B cell (primary cell): ENCODE measurements at regions of chr19 and their contacts with region 1.

Region 1: GRCh38 chr19:52942386-52943133 is 19.3 kb upstream of the ZNF888 start:
- DNase-seq: peak; percentile 96
- ATAC-seq: peak; percentile 100
- H3K4me3 ChIP-seq: peak overlapping the region; percentile 64 to 97 (median 88)
- H3K4me3 Mint-ChIP-seq: peak overlapping the region; percentile 92
- H3K27ac ChIP-seq: peak overlapping the region; percentile 72 to 90
- H3K27ac Mint-ChIP-seq: peak overlapping the region; percentile 86
- H3K4me1 ChIP-seq: peaks cover 6 to 20% of the 10 kb centered on the region in 2 donors
- H3K4me1 Mint-ChIP-seq: peaks cover 30% of the 10 kb centered on the region
- H3K27me3 ChIP-seq: no peaks in the 10 kb centered on the region
- H3K27me3 Mint-ChIP-seq: no peaks in the 10 kb centered on the region
- CTCF ChIP-seq: no peak

Region 2: GRCh38 chr19:52527134-52527955 is 415.2 kb before region 1 on chr19 and contains the start of gene ZNF808:
- CTCF ChIA-PET with region 1: no interaction called
- POLR2A ChIA-PET with region 1: no interaction called
- intact Hi-C with region 1: loop called (anchors 5 kb)
- DNase-seq: peak; percentile 94
- ATAC-seq: peak; percentile 92
- H3K4me3 ChIP-seq: peak within 1 kb of the TSS; percentile 60 to 97 (median 89)
- H3K4me3 Mint-ChIP-seq: peak within 1 kb of the TSS; percentile 96
- H3K27ac ChIP-seq: peak within 1 kb of the TSS; percentile 88 to 94
- H3K27ac Mint-ChIP-seq: peak within 1 kb of the TSS; percentile 96
- H3K4me1 ChIP-seq: peaks cover 9 to 19% of the 10 kb centered on the region in 2 donors
- H3K4me1 Mint-ChIP-seq: peaks cover 26% of the 10 kb centered on the region
- H3K27me3 ChIP-seq: no peaks in the 10 kb centered on the region
- H3K27me3 Mint-ChIP-seq: no peaks in the 10 kb centered on the region
- CTCF ChIP-seq: peak; percentile 64
- total RNA-seq, gene ZNF808: 54.8 and 56.0 TPM in 2 replicates

Region 3: DNA sequence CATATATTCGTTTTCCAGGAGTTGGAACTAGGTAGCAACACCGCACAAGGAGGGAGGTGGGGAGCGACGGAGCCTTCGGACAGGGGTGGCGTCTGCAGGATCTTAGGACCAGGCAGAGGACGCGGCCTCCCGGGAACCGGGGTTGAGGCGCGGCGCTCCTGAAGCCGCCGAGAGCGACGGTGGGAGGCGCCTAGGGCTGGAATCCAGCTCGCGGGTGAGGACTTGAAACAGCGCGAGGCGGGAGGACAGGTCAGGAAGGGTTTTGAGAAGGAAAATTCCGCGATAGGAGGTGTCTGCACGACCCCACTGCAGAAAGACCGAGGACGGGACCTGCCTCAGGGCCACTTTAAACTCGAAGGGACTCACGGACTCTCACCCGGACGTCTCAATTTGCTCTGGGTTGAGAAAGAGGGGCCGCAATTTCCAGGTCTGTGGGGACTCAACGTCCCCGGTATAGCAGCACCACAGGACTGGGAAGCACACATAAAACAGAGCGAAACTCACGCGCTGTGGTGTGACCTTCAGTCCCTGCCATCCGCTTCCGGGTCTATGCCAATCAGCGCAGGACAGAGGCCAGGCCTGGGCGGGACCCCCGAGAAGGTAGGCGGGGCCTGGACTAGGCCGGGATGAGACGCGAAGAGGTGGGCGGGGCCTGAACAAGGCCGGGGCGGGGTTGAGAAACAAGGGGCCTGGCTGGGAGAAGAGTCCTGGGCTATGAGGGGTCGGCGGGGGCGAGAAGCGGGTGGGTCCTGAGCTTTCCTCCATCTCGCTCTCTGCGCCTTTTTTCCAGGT is 45.2 kb before region 1 on chr19 and contains the start of gene ZNF320:
- CTCF ChIA-PET with region 1: no interaction called
- POLR2A ChIA-PET with region 1: no interaction called
- intact Hi-C with region 1: loop called (anchors 1 kb)
- DNase-seq: peak; percentile 95
- ATAC-seq: peak; percentile 100
- H3K4me3 ChIP-seq: peak within 1 kb of the TSS; percentile 85 to 98 (median 98)
- H3K4me3 Mint-ChIP-seq: peak within 1 kb of the TSS; percentile 96
- H3K27ac ChIP-seq: peak within 1 kb of the TSS; percentile 66 to 83
- H3K27ac Mint-ChIP-seq: peak within 1 kb of the TSS; percentile 94
- H3K4me1 ChIP-seq: peaks cover 5 to 17% of the 10 kb centered on the region in 2 donors
- H3K4me1 Mint-ChIP-seq: peaks cover 20% of the 10 kb centered on the region
- H3K27me3 ChIP-seq: no peaks in the 10 kb centered on the region
- H3K27me3 Mint-ChIP-seq: no peaks in the 10 kb centered on the region
- CTCF ChIP-seq: no peak
- total RNA-seq, gene ZNF320: 33.1 and 36.0 TPM in 2 replicates

Region 4: DNA sequence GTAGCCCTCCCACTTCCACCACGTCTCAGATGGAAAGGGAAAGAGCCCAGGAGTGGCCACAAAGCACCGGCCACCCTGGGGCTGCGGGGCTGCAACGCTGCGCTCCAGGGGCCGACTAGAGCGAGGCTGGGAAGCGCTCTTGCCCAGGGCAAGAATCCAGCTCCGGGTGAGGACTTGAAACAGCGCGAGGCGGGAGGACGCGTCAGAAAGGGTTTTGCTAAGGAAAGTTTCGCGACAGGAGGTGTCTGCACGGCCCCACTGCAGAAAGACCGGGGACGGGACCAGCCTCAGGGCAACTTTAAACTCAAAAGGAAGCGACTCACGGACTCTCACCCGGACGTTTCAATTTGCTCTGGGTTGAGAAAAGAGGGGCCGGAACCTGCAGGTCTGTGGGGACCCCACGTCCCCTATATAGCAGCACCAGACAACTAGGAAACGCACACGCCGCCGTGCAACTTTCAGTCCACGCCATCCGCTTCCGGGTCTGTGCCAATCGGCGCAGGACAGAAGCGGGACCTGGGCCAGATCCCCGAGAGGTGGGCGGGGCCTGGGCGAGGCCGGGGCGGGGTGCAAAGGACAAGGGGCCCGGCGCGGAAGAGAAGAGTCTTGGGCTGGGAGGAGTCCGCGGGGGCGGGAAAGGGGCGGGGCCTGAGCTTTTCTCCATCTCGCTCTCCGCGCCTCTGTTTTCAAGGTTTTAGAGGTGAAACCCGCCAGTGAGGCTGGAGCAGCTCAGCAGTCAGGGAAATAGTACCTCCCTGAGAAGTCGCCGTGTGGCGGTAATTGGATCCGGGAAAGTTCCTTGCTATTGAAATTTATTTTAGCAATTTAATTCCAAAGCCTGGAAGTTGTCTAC is 20.1 kb after region 1 on chr19 and contains the start of gene ZNF816:
- CTCF ChIA-PET with region 1: interaction called, 3 read pairs
- POLR2A ChIA-PET with region 1: no interaction called
- intact Hi-C with region 1: loop called (anchors 1 kb)
- DNase-seq: peak; percentile 96
- ATAC-seq: peak; percentile 100
- H3K4me3 ChIP-seq: peak within 1 kb of the TSS; percentile 72 to 92 (median 80)
- H3K4me3 Mint-ChIP-seq: peak within 1 kb of the TSS; percentile 92
- H3K27ac ChIP-seq: peak within 1 kb of the TSS; percentile 50 to 69
- H3K27ac Mint-ChIP-seq: peak within 1 kb of the TSS; percentile 92
- H3K4me1 ChIP-seq: peaks cover 14 to 19% of the 10 kb centered on the region in 2 donors
- H3K4me1 Mint-ChIP-seq: peaks cover 32% of the 10 kb centered on the region
- H3K27me3 ChIP-seq: no peaks in the 10 kb centered on the region
- H3K27me3 Mint-ChIP-seq: no peaks in the 10 kb centered on the region
- CTCF ChIP-seq: no peak
- total RNA-seq, gene ZNF816: 22.3 and 25.0 TPM in 2 replicates

Region 5: DNA sequence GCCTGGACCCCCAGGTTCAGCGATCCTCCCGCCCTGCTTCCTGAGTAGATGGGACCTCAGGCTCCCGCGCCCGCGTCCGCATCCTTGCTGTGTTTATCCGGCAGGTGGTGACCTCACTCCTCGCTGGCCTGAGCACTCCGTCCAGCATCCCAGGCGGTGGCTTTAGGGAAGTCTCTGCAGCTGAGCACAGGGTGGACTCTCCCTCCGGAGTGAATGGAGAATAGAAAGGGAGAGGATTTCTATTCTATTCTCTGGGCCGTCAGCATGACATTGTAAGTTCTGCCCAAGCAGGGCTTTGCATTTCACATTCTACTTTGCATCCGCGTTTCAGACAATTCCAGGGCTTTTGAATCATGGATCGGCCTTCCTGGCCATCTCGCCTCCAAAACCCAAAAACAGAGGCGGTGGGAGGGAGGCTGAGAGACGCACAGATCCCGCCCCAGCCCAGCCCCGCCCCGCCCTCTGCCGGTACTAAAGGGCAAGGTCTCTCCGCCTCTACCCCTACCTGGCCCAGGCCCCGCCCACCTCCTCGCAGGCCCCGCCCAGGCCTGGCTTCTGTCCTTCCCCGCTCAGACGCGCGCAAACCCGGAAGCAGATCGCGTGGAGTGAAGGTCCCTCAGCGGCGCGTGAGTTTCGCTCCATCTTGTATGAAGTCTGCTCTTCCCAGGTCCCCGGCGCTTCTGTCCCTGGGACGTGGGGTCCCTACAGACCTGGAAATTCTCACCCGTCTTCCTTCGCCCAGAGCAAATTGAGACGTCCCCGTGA is 422.8 kb after region 1 on chr19 and contains the start of gene ZNF525:
- CTCF ChIA-PET with region 1: no interaction called
- POLR2A ChIA-PET with region 1: no interaction called
- intact Hi-C with region 1: loop called (anchors 10 kb)
- DNase-seq: peak; percentile 97
- ATAC-seq: peak; percentile 100
- H3K4me3 ChIP-seq: peak within 1 kb of the TSS; percentile 79 to 99 (median 90)
- H3K4me3 Mint-ChIP-seq: peak within 1 kb of the TSS; percentile 93
- H3K27ac ChIP-seq: peak within 1 kb of the TSS; percentile 66 to 91
- H3K27ac Mint-ChIP-seq: peak within 1 kb of the TSS; percentile 94
- H3K4me1 ChIP-seq: peaks cover 9 to 11% of the 10 kb centered on the region in 2 donors
- H3K4me1 Mint-ChIP-seq: peaks cover 25% of the 10 kb centered on the region
- H3K27me3 ChIP-seq: no peaks in the 10 kb centered on the region
- H3K27me3 Mint-ChIP-seq: no peaks in the 10 kb centered on the region
- CTCF ChIP-seq: peak; percentile 63
- total RNA-seq, gene ZNF525: 33.8 and 34.3 TPM in 2 replicates